PC-3 (cell line): ENCODE measurements at regions of chr20 and their contacts with region 1.

Region 1: GRCh38 chr20:34083137-34083536 is 28.9 kb downstream of the EIF2S2 start:
- DNase-seq: peak; percentile 76
- ATAC-seq: peak; percentile 85
- H3K4me3 ChIP-seq: no peak overlapping the region
- H3K27ac ChIP-seq: no peak overlapping the region
- H3K4me1 ChIP-seq: peaks cover 8% of the 10 kb centered on the region; the same call in 1 of the 2 replicates
- H3K27me3 ChIP-seq: no peaks in the 10 kb centered on the region
- CTCF ChIP-seq: peak; percentile 39; the same call in 1 of the 2 replicates

Region 2: GRCh38 chr20:33926425-33926824 is 156.7 kb before region 1 on chr20:
- CTCF ChIA-PET with region 1: interaction called, 10 read pairs
- POLR2A ChIA-PET with region 1: no interaction called
- intact Hi-C with region 1: no loop called
- DNase-seq: no peak
- ATAC-seq: no peak
- H3K4me3 ChIP-seq: no peak overlapping the region
- H3K27ac ChIP-seq: no peak overlapping the region
- H3K4me1 ChIP-seq: no peaks in the 10 kb centered on the region
- H3K27me3 ChIP-seq: peaks cover 14% of the 10 kb centered on the region
- CTCF ChIP-seq: no peak